ENCODE measurements at regions of chr17 and their contacts with region 1.

Region 1: DNA sequence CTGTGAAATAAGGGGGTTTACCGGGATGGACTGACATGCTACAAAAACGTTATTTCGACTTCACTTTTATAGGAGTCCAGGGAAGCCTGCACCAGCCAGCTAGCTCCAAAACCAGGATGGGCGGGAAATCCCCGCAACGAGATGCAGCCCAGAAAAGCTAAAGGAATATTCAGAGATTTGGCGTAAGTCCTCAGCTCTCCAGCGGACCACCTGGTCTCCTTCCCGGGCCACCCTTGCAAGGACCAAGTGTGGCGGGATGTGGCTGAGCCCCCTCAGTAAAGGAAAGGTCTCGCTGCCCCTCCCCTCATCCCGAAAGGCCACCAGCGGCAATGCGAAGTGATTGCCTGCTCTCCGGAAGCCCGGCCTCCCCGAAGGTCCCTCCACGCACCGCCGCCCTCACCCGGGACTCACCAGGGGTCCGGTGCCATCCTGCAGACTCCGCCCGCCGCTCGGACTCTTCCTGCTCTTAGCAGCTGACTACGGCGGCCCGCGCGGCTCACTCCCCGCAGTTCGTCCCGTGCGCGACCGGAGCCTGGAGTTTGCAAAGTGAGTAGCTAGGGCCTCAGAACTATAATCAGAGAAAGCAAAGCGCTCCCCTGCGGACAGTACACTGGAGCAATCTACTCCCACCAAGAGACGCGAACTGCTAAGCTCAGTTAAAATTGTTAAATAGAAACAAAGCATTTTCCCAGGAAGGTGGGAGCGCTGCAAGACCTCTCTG is at the start of gene STX8:
- DNase-seq: peak; percentile 31
- H3K4me3 ChIP-seq: peak within 1 kb of the TSS; percentile 95
- H3K27me3 ChIP-seq: no peaks in the 10 kb centered on the region
- CTCF ChIP-seq: peak; percentile 15; the same call in 1 of the 2 replicates
- polyA plus RNA-seq, gene STX8: 44.7 and 77.2 TPM in 2 replicates

Region 2: GRCh38 chr17:9594065-9594464 is 18.5 kb after region 1 on chr17:
- CTCF ChIA-PET with region 1: interaction called, 14 read pairs
- POLR2A ChIA-PET with region 1: no interaction called
- DNase-seq: no peak
- H3K4me3 ChIP-seq: no peak overlapping the region
- H3K27me3 ChIP-seq: no peaks in the 10 kb centered on the region
- CTCF ChIP-seq: no peak

Region 3: GRCh38 chr17:9676742-9677387 is 101.3 kb after region 1 on chr17:
- CTCF ChIA-PET with region 1: interaction called, 32 read pairs
- POLR2A ChIA-PET with region 1: no interaction called
- DNase-seq: no peak
- H3K4me3 ChIP-seq: no peak overlapping the region
- H3K27me3 ChIP-seq: no peaks in the 10 kb centered on the region
- CTCF ChIP-seq: no peak

Measured in BJ (cell line).